ENCODE measurements at regions of chr20 and their contacts with region 1.

Region 1: DNA sequence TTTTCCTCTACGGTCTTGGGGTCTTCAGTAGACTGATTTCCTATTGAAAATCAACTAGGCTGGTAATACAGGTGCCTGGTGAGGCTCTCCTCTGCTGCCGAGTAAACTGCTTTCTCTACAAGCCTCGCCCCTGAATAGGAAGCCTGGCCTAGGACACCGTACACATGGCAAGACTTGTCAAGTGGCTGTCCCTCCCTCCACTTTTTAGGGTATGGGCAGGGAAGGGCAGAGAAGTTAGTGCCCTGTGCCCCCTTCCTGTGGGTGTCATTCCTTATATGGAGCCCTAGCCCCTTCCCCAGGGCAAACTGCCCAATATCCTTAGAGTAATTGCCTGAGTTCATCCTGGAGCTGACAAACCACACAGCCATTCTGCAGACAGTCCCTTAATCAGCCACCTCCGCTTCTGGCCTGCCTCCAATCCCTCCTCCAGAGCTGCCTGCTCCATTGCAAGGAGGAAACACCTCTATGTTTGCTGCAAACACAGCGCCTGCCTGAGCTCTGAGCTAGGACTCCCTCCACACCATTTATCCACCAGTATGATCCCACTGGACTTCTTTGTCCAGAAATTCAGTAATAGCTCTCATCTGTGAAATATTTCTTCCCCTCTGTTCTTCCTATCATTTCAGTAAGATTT is 93.1 kb downstream of the CHD6 start:
- DNase-seq: peak; percentile 49 to 65 (median 56)
- H3K4me3 ChIP-seq: no peak overlapping the region
- H3K27ac ChIP-seq: no peak overlapping the region
- H3K4me1 ChIP-seq: peaks cover 8% of the 10 kb centered on the region
- H3K27me3 ChIP-seq: no peaks in the 10 kb centered on the region
- CTCF ChIP-seq: no peak
- EP300 ChIP-seq: no peak
- POLR2A ChIP-seq: no peak

Region 2: GRCh38 chr20:41617931-41618806 is 93.1 kb after region 1 on chr20 and contains the start of gene CHD6:
- intact Hi-C with region 1: loop called in 1 of 4 experiments (anchors 5 kb)
- DNase-seq: peak; percentile 100
- H3K4me3 ChIP-seq: peak within 1 kb of the TSS; percentile 62
- H3K27ac ChIP-seq: peak within 1 kb of the TSS; percentile 63 to 89
- H3K4me1 ChIP-seq: peaks cover 4% of the 10 kb centered on the region
- H3K27me3 ChIP-seq: no peaks in the 10 kb centered on the region
- CTCF ChIP-seq: no peak
- EP300 ChIP-seq: no peak
- POLR2A ChIP-seq: no peak
- total RNA-seq, gene CHD6: 35.8 to 82.4 (median 60.5) TPM